Posterior vena cava (tissue), 2 donors: ENCODE measurements at regions of chr2 and their contacts with region 1.

Region 1: DNA sequence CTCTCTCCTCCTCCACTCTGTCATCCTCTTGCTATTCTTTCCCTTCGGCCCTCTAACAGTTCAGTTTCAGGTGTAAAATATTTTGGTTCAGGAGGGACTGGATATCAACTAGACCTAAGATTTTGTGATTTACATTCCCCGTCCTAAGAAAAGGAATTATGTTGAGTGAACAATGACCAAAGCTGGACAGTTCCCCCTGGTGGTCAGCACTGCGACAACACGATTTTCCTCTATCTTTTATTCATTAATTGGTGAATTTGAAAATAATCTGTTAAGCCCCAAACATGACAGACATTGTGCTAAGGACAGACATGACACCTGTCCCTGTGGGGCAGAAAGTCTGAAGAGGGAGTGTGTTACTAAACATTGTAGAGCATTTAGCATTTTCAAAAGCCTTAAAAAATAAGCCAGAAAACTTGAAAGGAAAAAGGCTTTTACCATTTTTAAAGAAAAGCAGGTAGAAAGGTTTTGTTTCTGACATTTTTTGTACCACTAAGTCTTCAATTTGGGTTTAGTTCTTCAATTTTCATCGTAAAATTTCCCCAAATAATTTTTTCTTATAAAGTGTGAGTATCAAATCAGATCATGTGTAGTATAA is 28.4 kb upstream of the GTF2A1L start:
- DNase-seq: no peak

Region 2: DNA sequence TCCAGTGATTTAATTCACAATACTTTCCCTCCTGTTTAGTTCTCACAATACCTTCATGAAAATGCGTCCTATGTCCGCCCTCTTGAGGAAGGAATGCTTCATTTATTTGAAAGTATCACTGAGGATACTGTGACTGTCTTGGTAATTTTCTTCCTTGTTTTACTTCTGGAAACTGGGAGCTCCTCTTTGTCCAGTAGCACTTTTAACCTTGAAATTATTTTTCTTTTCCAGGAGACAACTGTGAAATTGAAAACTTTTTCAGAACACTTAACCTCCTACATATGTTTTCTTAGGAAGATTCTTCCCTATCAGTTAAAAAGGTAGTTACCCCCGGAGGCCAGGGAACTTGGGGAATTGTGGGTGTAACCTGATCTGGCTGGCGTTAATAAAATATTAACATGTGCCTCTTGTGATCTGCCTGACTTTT is 118.2 kb before region 1 on chr2:
- intact Hi-C with region 1: loop called (anchors 5 to 10 kb)
- DNase-seq: no peak

Region 3: GRCh38 chr2:48529676-48530032 is 59.6 kb before region 1 on chr2:
- intact Hi-C with region 1: loop called in 1 of 2 experiments (anchors 10 kb)
- DNase-seq: no peak

Region 4: DNA sequence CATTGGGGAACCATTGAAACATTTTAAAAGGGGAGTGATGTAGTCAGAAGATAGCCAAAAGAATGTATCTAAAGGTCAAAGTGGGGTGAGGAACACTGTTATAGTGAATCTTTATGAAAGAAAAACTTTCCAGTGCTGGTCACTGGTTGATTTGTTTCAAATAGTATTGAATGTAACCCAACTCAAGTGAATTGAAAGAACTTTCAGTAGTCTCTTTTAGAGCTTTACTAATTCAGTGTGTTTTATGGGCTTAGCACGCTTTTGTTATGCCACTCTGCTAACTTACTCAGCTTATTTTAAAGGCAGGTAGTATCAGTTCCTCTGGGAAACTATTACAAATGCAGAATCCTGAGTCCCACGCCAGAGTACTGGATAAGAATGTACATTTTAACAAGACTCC is 85.7 kb after region 1 on chr2:
- intact Hi-C with region 1: no loop called
- DNase-seq: no peak